IMR-90 (cell line): ENCODE measurements at regions of chr7 and their contacts with region 1.

Region 1: DNA sequence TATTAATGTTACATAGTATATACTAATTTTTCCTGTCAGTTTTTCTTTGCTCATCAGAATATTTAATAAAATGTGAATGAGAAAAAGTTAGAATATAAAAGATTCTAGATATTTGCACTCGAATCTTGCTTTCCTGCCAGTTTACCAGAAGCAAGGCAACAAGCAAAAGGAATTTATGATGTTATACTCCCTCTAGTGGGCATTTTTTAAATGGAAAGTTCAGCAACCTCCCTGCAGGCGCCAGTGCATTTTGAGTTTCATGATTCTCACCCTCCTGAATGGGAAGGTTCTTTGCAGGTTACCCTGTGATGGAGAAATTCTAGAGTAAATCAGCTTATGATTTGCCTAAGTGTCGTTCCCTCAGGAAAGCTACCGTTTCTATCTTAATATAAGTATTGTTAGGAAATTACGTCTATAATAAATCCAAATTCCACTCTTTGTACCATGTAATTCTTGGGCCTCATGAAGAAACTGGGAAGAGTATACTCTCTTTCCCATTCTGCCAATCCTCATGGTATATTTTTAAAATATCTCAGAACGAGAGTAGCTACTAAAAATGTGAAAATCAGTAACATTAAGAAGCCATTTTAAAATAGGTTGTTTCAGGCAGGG is 350.0 kb downstream of the CRPPA start:
- DNase-seq: peak; percentile 67
- ATAC-seq: peak; percentile 56
- H3K4me3 ChIP-seq: no peak overlapping the region
- H3K27ac ChIP-seq: no peak overlapping the region
- H3K4me1 ChIP-seq: peaks cover 4% of the 10 kb centered on the region
- H3K27me3 ChIP-seq: no peaks in the 10 kb centered on the region
- CTCF ChIP-seq: peak; percentile 84
- POLR2A ChIP-seq: no peak
- RAD21 ChIP-seq: peak; percentile 88

Region 2: GRCh38 chr7:15199482-15199881 is 871.9 kb before region 1 on chr7:
- CTCF ChIA-PET with region 1: no interaction called
- POLR2A ChIA-PET with region 1: no interaction called
- dilution Hi-C with region 1: no loop called
- in situ Hi-C with region 1: no loop called
- intact Hi-C with region 1: loop called (anchors 5 kb)
- DNase-seq: peak; percentile 1
- ATAC-seq: no peak
- H3K4me3 ChIP-seq: no peak overlapping the region
- H3K27ac ChIP-seq: no peak overlapping the region
- H3K4me1 ChIP-seq: no peaks in the 10 kb centered on the region
- H3K27me3 ChIP-seq: no peaks in the 10 kb centered on the region
- CTCF ChIP-seq: peak; percentile 18; the same call in 1 of the 2 replicates
- POLR2A ChIP-seq: no peak
- RAD21 ChIP-seq: no peak

Region 3: GRCh38 chr7:15305002-15305600 is 766.3 kb before region 1 on chr7:
- CTCF ChIA-PET with region 1: no interaction called
- POLR2A ChIA-PET with region 1: no interaction called
- dilution Hi-C with region 1: no loop called
- in situ Hi-C with region 1: no loop called
- intact Hi-C with region 1: loop called (anchors 1 kb)
- DNase-seq: peak; percentile 39
- ATAC-seq: no peak
- H3K4me3 ChIP-seq: no peak overlapping the region
- H3K27ac ChIP-seq: no peak overlapping the region
- H3K4me1 ChIP-seq: no peaks in the 10 kb centered on the region
- H3K27me3 ChIP-seq: no peaks in the 10 kb centered on the region
- CTCF ChIP-seq: peak; percentile 75
- POLR2A ChIP-seq: no peak
- RAD21 ChIP-seq: peak; percentile 74

Region 4: GRCh38 chr7:15326044-15326644 is 745.2 kb before region 1 on chr7:
- CTCF ChIA-PET with region 1: interaction called, 5 read pairs
- POLR2A ChIA-PET with region 1: no interaction called
- dilution Hi-C with region 1: no loop called
- in situ Hi-C with region 1: no loop called
- intact Hi-C with region 1: loop called (anchors 1 kb)
- DNase-seq: peak; percentile 35
- ATAC-seq: 0 out of 2 replicates have a peak, but pooled peaks have one; percentile 48
- H3K4me3 ChIP-seq: no peak overlapping the region
- H3K27ac ChIP-seq: no peak overlapping the region
- H3K4me1 ChIP-seq: no peaks in the 10 kb centered on the region
- H3K27me3 ChIP-seq: no peaks in the 10 kb centered on the region; the same call in 1 of the 2 replicates
- CTCF ChIP-seq: peak; percentile 73
- POLR2A ChIP-seq: no peak
- RAD21 ChIP-seq: peak; percentile 71

Region 5: GRCh38 chr7:15503603-15504290 is 567.6 kb before region 1 on chr7:
- CTCF ChIA-PET with region 1: no interaction called
- POLR2A ChIA-PET with region 1: no interaction called
- dilution Hi-C with region 1: no loop called
- in situ Hi-C with region 1: no loop called
- intact Hi-C with region 1: loop called (anchors 10 kb)
- DNase-seq: peak; percentile 15
- ATAC-seq: peak; percentile 72
- H3K4me3 ChIP-seq: no peak overlapping the region
- H3K27ac ChIP-seq: no peak overlapping the region
- H3K4me1 ChIP-seq: 0 out of 2 replicates have a peak, but pooled peaks cover 1% of the 10 kb centered on the region
- H3K27me3 ChIP-seq: no peaks in the 10 kb centered on the region
- CTCF ChIP-seq: no peak
- POLR2A ChIP-seq: no peak
- RAD21 ChIP-seq: no peak

Region 6: DNA sequence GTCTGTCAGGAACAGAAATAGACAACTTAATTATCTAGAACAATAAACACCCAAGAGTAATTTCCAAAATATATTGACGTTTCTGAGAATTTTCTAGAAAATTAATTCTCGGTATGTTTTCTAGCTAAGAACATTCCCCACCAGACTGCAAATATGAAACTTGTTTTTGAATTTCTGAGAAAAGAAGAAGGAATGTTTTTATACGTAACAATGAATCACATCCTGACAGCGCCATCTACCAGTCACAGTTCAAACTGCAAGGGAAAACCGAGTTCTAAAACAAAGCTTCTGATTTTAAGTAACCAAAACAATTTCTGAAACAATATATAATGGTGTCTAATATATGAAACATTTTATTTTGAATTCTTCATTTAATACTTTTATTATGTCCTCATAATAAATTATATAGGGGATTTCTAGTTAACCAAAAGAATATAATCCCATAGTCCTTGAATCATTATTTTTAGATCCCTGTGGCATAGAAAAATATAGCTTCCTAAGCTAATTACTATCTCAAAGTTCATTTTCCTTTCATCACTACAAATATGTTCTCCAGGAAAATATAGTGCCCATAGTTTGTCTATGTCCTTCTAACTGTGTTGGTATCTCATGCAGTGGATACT is 350.4 kb before region 1 on chr7:
- CTCF ChIA-PET with region 1: interaction called, 6 read pairs
- POLR2A ChIA-PET with region 1: no interaction called
- dilution Hi-C with region 1: no loop called
- in situ Hi-C with region 1: loop called (anchors 10 kb)
- intact Hi-C with region 1: loop called (anchors 2 kb)
- DNase-seq: peak; percentile 53
- ATAC-seq: no peak
- H3K4me3 ChIP-seq: no peak overlapping the region
- H3K27ac ChIP-seq: no peak overlapping the region
- H3K4me1 ChIP-seq: no peaks in the 10 kb centered on the region
- H3K27me3 ChIP-seq: no peaks in the 10 kb centered on the region
- CTCF ChIP-seq: peak; percentile 70
- POLR2A ChIP-seq: no peak
- RAD21 ChIP-seq: peak; percentile 63

Region 7: GRCh38 chr7:16106300-16106699 is 34.9 kb after region 1 on chr7:
- CTCF ChIA-PET with region 1: no interaction called
- POLR2A ChIA-PET with region 1: no interaction called
- dilution Hi-C with region 1: no loop called
- in situ Hi-C with region 1: no loop called
- intact Hi-C with region 1: no loop called
- DNase-seq: no peak
- ATAC-seq: no peak
- H3K4me3 ChIP-seq: no peak overlapping the region
- H3K27ac ChIP-seq: no peak overlapping the region
- H3K4me1 ChIP-seq: no peaks in the 10 kb centered on the region
- H3K27me3 ChIP-seq: no peaks in the 10 kb centered on the region
- CTCF ChIP-seq: no peak
- POLR2A ChIP-seq: no peak
- RAD21 ChIP-seq: no peak

Region 8: GRCh38 chr7:16129431-16130116 is 58.2 kb after region 1 on chr7:
- CTCF ChIA-PET with region 1: no interaction called
- POLR2A ChIA-PET with region 1: no interaction called
- dilution Hi-C with region 1: no loop called
- in situ Hi-C with region 1: no loop called
- intact Hi-C with region 1: no loop called
- DNase-seq: peak; percentile 80
- ATAC-seq: peak; percentile 79
- H3K4me3 ChIP-seq: no peak overlapping the region
- H3K27ac ChIP-seq: no peak overlapping the region
- H3K4me1 ChIP-seq: peaks cover 6% of the 10 kb centered on the region
- H3K27me3 ChIP-seq: no peaks in the 10 kb centered on the region
- CTCF ChIP-seq: no peak
- POLR2A ChIP-seq: no peak
- RAD21 ChIP-seq: no peak